WTC11 (cell line): ENCODE measurements at regions of chr20 and their contacts with region 1.

Region 1: GRCh38 chr20:31630187-31630790 is 7.4 kb upstream of the COX4I2 start:
- DNase-seq: no peak
- ATAC-seq: no peak
- H3K4me3 Mint-ChIP-seq: no peak overlapping the region
- H3K27ac Mint-ChIP-seq: no peak overlapping the region
- H3K4me1 Mint-ChIP-seq: no peaks in the 10 kb centered on the region
- H3K27me3 Mint-ChIP-seq: no peaks in the 10 kb centered on the region
- CTCF ChIP-seq: no peak

Region 2: DNA sequence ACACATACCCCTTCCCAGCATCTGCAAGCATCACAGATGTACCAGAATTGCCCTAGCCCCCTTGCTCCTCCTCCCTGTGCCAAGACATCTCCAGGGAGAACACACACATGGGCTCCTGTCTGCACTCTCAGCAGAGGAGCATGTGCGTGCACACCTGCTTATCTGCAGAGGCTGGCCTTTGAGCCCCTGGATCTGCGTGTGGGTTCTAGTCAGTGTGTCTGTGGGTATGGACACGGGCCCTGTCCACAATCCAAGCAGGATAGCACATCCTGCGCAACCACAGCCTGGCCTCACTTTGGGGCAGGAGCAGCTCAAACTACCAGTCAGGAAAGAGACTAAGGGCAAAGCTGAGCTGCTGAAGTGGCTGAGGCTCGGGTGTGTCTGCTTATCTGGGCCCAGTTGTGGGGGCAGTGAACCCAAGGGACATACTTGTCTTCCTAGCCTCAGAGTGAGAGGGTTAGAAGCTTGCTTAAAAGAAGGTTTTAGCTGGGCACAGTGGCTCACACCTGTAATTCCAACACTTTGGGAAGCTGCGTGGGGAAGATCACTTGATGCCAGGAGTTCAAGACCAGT is 75.0 kb before region 1 on chr20:
- CTCF ChIA-PET with region 1: interaction called, 87 read pairs
- POLR2A ChIA-PET with region 1: no interaction called
- DNase-seq: no peak
- ATAC-seq: no peak
- H3K4me3 Mint-ChIP-seq: no peak overlapping the region
- H3K27ac Mint-ChIP-seq: no peak overlapping the region
- H3K4me1 Mint-ChIP-seq: peaks cover 6% of the 10 kb centered on the region
- H3K27me3 Mint-ChIP-seq: no peaks in the 10 kb centered on the region
- CTCF ChIP-seq: no peak

Region 3: GRCh38 chr20:31572701-31573554 is 57.4 kb before region 1 on chr20:
- CTCF ChIA-PET with region 1: interaction called, 45 read pairs
- POLR2A ChIA-PET with region 1: no interaction called
- DNase-seq: peak; percentile 94
- ATAC-seq: peak; percentile 82
- H3K4me3 Mint-ChIP-seq: peak overlapping the region; percentile 83
- H3K27ac Mint-ChIP-seq: peak overlapping the region; percentile 97
- H3K4me1 Mint-ChIP-seq: peaks cover 60% of the 10 kb centered on the region
- H3K27me3 Mint-ChIP-seq: no peaks in the 10 kb centered on the region; the same call in 1 of the 2 replicates
- CTCF ChIP-seq: no peak

Region 4: GRCh38 chr20:31587545-31588389 is 42.5 kb before region 1 on chr20:
- CTCF ChIA-PET with region 1: interaction called, 11 read pairs
- POLR2A ChIA-PET with region 1: interaction called, 3 read pairs
- DNase-seq: no peak
- ATAC-seq: peak; percentile 27
- H3K4me3 Mint-ChIP-seq: peak overlapping the region; percentile 76
- H3K27ac Mint-ChIP-seq: peak overlapping the region; percentile 50
- H3K4me1 Mint-ChIP-seq: peaks cover 56% of the 10 kb centered on the region
- H3K27me3 Mint-ChIP-seq: peaks cover 14% of the 10 kb centered on the region
- CTCF ChIP-seq: no peak

Region 5: GRCh38 chr20:31652917-31653396 is 22.7 kb after region 1 on chr20:
- CTCF ChIA-PET with region 1: interaction called, 36 read pairs
- POLR2A ChIA-PET with region 1: interaction called, 5 read pairs
- DNase-seq: no peak
- ATAC-seq: no peak
- H3K4me3 Mint-ChIP-seq: no peak overlapping the region
- H3K27ac Mint-ChIP-seq: no peak overlapping the region
- H3K4me1 Mint-ChIP-seq: no peaks in the 10 kb centered on the region
- H3K27me3 Mint-ChIP-seq: peaks cover 4% of the 10 kb centered on the region
- CTCF ChIP-seq: no peak

Region 6: DNA sequence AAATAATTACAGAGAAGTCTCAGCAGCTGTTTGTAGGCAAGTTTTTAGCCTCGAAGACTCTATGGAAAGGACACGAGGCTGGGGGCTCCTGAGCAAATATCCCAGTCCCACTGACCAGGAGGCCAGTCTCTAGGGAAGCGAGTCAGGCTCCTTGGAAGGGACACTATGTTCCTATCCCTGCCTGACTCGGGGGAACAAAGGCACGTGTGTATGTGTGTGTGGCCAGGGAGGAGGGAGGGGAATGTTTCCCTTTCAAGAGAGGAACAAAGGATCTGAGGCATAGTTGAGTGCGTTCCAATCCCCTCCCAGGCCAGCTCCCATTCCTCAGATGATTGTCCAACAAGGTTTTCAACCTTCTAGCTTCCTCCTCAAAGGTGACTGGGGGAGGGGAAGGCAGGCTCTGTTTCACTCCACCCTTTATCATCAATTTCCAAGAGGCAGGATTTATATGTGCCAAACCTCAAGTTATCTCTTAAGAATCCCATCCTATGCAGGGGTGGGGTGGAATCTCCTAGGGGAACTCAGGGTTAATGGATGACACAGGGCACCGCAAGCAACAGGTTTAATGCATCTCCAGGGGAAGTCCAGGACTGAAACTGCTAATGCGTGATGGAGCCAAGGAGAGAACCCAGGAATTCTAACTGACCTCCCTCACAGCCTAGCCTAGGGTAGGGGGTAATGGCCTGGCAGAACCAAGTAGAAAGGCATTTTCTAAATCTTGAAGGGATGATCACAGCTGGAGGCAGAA is 82.4 kb after region 1 on chr20:
- CTCF ChIA-PET with region 1: interaction called, 12 read pairs
- POLR2A ChIA-PET with region 1: no interaction called
- DNase-seq: peak; percentile 57
- ATAC-seq: peak; percentile 81
- H3K4me3 Mint-ChIP-seq: peak overlapping the region; percentile 45
- H3K27ac Mint-ChIP-seq: peak overlapping the region; percentile 93
- H3K4me1 Mint-ChIP-seq: peaks cover 88% of the 10 kb centered on the region
- H3K27me3 Mint-ChIP-seq: no peaks in the 10 kb centered on the region
- CTCF ChIP-seq: no peak

Region 7: GRCh38 chr20:31861346-31862156 is 231.3 kb after region 1 on chr20:
- CTCF ChIA-PET with region 1: no interaction called
- POLR2A ChIA-PET with region 1: interaction called, 15 read pairs
- DNase-seq: peak; percentile 82
- ATAC-seq: peak; percentile 82
- H3K4me3 Mint-ChIP-seq: peak overlapping the region; percentile 91
- H3K27ac Mint-ChIP-seq: peak overlapping the region; percentile 93
- H3K4me1 Mint-ChIP-seq: peaks cover 15% of the 10 kb centered on the region
- H3K27me3 Mint-ChIP-seq: peaks cover 37% of the 10 kb centered on the region
- CTCF ChIP-seq: no peak